ENCODE measurements at regions of chr1 and their contacts with region 1.

Region 1: DNA sequence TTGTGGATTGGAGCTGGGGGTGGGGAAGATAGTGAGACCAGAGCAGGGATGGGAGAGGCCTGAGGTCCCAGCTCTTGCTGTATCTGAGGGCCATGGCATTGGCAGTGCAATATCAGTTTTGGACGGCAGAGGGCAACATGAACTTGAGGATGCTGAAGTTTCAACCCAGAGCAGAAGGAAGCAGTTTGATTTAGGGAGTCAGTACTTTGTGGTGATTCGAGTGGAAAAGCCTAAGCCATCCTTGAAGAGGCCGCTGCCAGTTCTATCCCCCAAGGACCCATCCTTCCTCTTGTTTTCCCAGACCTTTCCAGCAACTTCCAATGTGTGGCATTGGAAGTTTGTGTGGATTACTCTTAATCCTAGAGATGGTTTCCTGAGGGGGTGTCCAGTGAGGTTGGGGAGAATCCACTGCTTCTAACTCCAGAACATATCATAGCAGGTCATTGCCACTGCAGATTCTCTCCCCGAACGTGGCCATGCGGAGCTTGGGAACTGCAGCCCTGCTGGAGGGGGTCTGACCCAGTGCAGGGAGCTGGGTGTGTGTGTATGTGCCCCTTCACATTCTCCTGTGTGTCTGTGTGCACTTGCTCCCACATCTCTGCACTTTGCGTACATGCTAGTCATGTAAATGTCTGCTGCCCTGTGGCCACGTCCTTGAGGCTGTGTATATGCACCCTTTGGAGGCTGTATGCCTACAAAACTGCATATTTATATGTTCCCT is 24.1 kb downstream of the SLC26A9 start:
- DNase-seq: peak; percentile 56
- H3K4me3 Mint-ChIP-seq: no peak overlapping the region
- H3K27ac Mint-ChIP-seq: no peak overlapping the region
- H3K4me1 Mint-ChIP-seq: no peaks in the 10 kb centered on the region
- H3K27me3 Mint-ChIP-seq: peaks cover 14% of the 10 kb centered on the region

Region 2: GRCh38 chr1:205477759-205478247 is 441.4 kb before region 1 on chr1:
- intact Hi-C with region 1: no loop called
- DNase-seq: no peak
- H3K4me3 Mint-ChIP-seq: no peak overlapping the region
- H3K27ac Mint-ChIP-seq: no peak overlapping the region
- H3K4me1 Mint-ChIP-seq: peaks cover 28% of the 10 kb centered on the region
- H3K27me3 Mint-ChIP-seq: peaks cover 23% of the 10 kb centered on the region

Region 3: DNA sequence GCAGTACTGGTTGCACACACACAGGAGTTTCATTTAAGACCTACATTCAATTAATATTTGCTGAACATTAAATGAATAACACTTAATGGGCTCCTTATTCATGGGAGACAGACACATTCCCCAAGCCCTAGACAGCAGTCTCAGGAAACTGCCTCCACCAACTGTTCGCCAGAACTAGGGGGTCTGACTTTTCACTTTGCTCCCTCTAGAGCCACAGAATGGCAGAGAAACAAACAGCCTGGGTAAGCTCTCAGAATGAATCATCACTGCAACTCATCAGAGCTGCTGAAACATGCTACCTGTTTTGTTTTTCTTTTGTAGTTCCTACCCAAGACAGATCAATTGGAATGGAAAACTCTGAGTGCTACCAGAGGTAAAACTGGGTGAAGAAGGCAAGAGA is 319.1 kb before region 1 on chr1:
- intact Hi-C with region 1: no loop called
- DNase-seq: no peak
- H3K4me3 Mint-ChIP-seq: no peak overlapping the region
- H3K27ac Mint-ChIP-seq: peak overlapping the region; percentile 66
- H3K4me1 Mint-ChIP-seq: peaks cover 14% of the 10 kb centered on the region
- H3K27me3 Mint-ChIP-seq: no peaks in the 10 kb centered on the region

Region 4: DNA sequence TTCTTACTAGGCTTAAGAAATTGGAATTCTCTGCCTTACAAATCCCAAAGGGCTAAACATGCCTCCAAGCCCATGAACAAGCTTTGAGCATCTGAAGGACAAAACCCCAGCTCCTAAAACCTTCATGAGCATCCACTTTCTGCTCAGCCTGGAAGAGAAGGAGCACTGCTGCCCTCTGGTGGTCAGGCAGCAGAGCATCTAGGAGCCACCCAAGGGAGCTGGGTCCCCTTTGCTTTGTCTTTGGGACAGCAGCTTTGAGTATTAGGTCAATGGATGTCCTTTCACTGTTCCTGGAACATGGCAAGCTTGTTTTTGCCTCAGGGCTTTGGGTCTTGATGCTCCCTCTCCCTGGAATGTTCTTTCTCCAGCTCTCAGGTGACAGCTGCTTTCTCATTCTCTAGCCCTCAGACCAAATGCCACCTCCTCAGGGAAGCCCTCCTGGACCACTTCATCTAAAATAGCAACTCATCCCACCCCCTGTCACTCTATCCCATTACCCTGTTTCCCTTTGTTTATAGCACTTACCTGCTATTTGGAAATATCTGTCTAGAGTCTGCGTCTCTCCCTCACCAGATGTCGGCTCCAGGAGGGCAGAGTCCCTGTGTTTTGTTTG is 58.3 kb after region 1 on chr1:
- intact Hi-C with region 1: loop called (anchors 1 kb)
- DNase-seq: peak; percentile 63
- H3K4me3 Mint-ChIP-seq: no peak overlapping the region
- H3K27ac Mint-ChIP-seq: no peak overlapping the region
- H3K4me1 Mint-ChIP-seq: no peaks in the 10 kb centered on the region
- H3K27me3 Mint-ChIP-seq: no peaks in the 10 kb centered on the region

Region 5: GRCh38 chr1:206030714-206031113 is 111.5 kb after region 1 on chr1:
- intact Hi-C with region 1: loop called (anchors 2 kb)
- DNase-seq: peak; percentile 69
- H3K4me3 Mint-ChIP-seq: no peak overlapping the region
- H3K27ac Mint-ChIP-seq: no peak overlapping the region
- H3K4me1 Mint-ChIP-seq: peaks cover 17% of the 10 kb centered on the region
- H3K27me3 Mint-ChIP-seq: peaks cover 59% of the 10 kb centered on the region

Measured in activated T-helper 1 cell treated with anti-CD3 and anti-CD28 coated beads, Interleukin-12 subunit alpha, Interleukin-12 subunit beta, Interleukin-2, Interleukin-4 antibody, amounts not matched to agents 30 ng/mL and 10 ng/mL and 1 ng/mL, durations not matched to agents 14 hours and 24 hours and 36 hours (primary cell).